ENCODE measurements at regions of chr1 and their contacts with region 1.

Region 1: DNA sequence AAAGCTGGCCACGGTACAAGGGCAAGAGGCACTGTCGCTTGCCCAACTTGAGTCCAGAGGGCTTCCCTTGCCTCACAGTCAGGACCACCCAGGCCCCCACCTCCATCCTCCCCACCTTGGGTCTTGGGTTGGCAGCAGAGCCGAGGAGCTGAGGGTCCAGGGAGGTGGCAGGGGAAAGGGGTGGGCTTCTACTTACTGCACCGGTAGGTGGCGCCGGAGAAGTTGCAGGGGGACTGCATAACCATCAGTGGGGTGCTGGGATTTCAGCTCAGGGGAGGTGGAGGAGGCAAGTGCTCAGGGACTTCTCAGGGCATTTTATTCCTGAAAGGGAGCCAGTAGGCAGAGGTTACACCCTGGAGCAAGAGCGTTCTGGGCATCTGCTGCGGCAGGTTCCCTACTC is 44.0 kb downstream of the TRIM62 start:
- DNase-seq: peak; percentile 86
- ATAC-seq: peak; percentile 68
- H3K4me3 Mint-ChIP-seq: no peak overlapping the region
- H3K27ac Mint-ChIP-seq: no peak overlapping the region
- H3K4me1 Mint-ChIP-seq: peaks cover 49% of the 10 kb centered on the region
- H3K27me3 Mint-ChIP-seq: no peaks in the 10 kb centered on the region
- CTCF ChIP-seq: peak; percentile 61

Region 2: GRCh38 chr1:32964461-32965250 is 173.1 kb before region 1 on chr1 and contains the start of gene RNF19B:
- CTCF ChIA-PET with region 1: no interaction called
- POLR2A ChIA-PET with region 1: no interaction called
- DNase-seq: peak; percentile 97
- ATAC-seq: peak; percentile 97
- H3K4me3 Mint-ChIP-seq: peak within 1 kb of the TSS; percentile 69
- H3K27ac Mint-ChIP-seq: peak within 1 kb of the TSS; percentile 88
- H3K4me1 Mint-ChIP-seq: peaks cover 28% of the 10 kb centered on the region
- H3K27me3 Mint-ChIP-seq: peaks cover 40% of the 10 kb centered on the region
- CTCF ChIP-seq: no peak
- total RNA-seq, gene RNF19B: 14.8 to 21.9 TPM (median 15.4 TPM) in 3 replicates

Region 3: GRCh38 chr1:33127001-33127791 is 10.6 kb before region 1 on chr1:
- CTCF ChIA-PET with region 1: interaction called, 117 read pairs
- POLR2A ChIA-PET with region 1: no interaction called
- DNase-seq: peak; percentile 95
- ATAC-seq: peak; percentile 97
- H3K4me3 Mint-ChIP-seq: peak overlapping the region; percentile 79
- H3K27ac Mint-ChIP-seq: peak overlapping the region; percentile 28
- H3K4me1 Mint-ChIP-seq: peaks cover 19% of the 10 kb centered on the region
- H3K27me3 Mint-ChIP-seq: peaks cover 36% of the 10 kb centered on the region
- CTCF ChIP-seq: peak; percentile 66

Region 4: GRCh38 chr1:33161061-33161681 is 23.4 kb after region 1 on chr1:
- CTCF ChIA-PET with region 1: interaction called, 12 read pairs
- POLR2A ChIA-PET with region 1: no interaction called
- DNase-seq: peak; percentile 33
- ATAC-seq: peak; percentile 24
- H3K4me3 Mint-ChIP-seq: no peak overlapping the region
- H3K27ac Mint-ChIP-seq: no peak overlapping the region
- H3K4me1 Mint-ChIP-seq: peaks cover 52% of the 10 kb centered on the region
- H3K27me3 Mint-ChIP-seq: peaks cover 3% of the 10 kb centered on the region; the same call in 1 of the 2 replicates
- CTCF ChIP-seq: no peak

Region 5: DNA sequence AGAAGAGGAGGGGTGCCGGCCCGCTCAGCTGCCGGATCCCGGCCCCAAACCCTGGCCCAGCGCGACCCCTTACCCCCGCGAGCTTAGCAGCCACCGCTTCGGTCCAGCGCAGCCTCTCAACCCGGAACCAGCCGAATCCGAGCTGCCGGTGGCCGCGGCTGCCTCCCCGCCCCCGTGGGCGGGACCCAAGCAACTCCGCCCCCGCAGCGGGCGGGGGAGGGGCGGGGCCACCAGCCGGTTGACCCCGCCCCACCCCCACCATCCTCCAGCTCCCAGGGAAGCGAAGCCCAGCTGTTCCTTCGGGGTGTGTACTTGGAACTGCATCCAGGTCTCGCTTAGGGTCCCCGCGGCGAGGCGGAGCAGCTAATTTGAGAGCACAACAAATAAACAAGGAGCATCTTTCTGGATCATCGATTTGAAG is 44.1 kb after region 1 on chr1 and contains the start of gene TRIM62:
- CTCF ChIA-PET with region 1: interaction called, 33 read pairs
- POLR2A ChIA-PET with region 1: interaction called, 8 read pairs
- DNase-seq: peak; percentile 77
- ATAC-seq: peak; percentile 60
- H3K4me3 Mint-ChIP-seq: peak within 1 kb of the TSS; percentile 79
- H3K27ac Mint-ChIP-seq: peak within 1 kb of the TSS; percentile 60; the same call in 1 of the 2 replicates
- H3K4me1 Mint-ChIP-seq: peaks cover 24% of the 10 kb centered on the region
- H3K27me3 Mint-ChIP-seq: peaks cover 8% of the 10 kb centered on the region
- CTCF ChIP-seq: no peak
- total RNA-seq, gene TRIM62: 10.7 to 13.6 TPM (median 11.0 TPM) in 3 replicates